ENCODE measurements at regions of chr17 and their contacts with region 1.

Region 1: GRCh38 chr17:30093463-30094147 is 23.0 kb upstream of the NSRP1 start:
- DNase-seq: peak in 1 of 2 donors; percentile 50
- ATAC-seq: peak; percentile 53 to 82 (median 74)
- H3K4me3 ChIP-seq: no peak overlapping the region
- H3K27ac ChIP-seq: no peak overlapping the region
- H3K4me1 ChIP-seq: peaks cover 0 to 10% (median 7%) of the 10 kb centered on the region in 9 donors
- H3K27me3 ChIP-seq: peaks cover 0 to 15% (median 3%) of the 10 kb centered on the region in 7 donors
- CTCF ChIP-seq: peak; percentile 79 to 89 (median 83)

Region 2: DNA sequence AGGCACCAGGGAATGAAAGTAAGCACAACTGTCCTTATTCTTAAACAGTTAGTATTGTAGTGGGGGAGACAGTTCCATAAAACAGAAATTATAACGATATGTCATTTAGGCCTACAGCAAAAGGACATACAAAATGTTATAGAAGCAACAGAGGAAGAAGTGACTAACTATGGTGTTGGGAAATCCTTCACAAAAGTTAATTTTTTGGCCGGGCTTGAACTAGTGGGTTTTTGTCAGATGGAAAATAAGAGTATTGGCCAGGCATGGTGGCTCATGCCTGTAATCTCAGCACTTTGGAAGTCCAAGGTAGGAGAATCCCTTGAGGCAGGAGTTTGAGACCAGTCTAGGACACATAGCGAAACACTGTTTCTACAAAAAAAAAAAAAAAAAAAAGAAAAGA is 291.4 kb before region 1 on chr17:
- intact Hi-C with region 1: loop called in 8 of 10 experiments (anchors 5 to 10 kb)
- DNase-seq: no peak
- ATAC-seq: no peak
- H3K4me3 ChIP-seq: no peak overlapping the region
- H3K27ac ChIP-seq: no peak overlapping the region
- H3K4me1 ChIP-seq: no peaks in the 10 kb centered on the region
- H3K27me3 ChIP-seq: no peaks in the 10 kb centered on the region
- CTCF ChIP-seq: no peak

Region 3: GRCh38 chr17:29936724-29937123 is 156.9 kb before region 1 on chr17:
- intact Hi-C with region 1: loop called in 2 of 10 experiments (anchors 5 to 10 kb)
- DNase-seq: no peak
- ATAC-seq: no peak
- H3K4me3 ChIP-seq: no peak overlapping the region
- H3K27ac ChIP-seq: no peak overlapping the region
- H3K4me1 ChIP-seq: peaks cover 0 to 2% (median 2%) of the 10 kb centered on the region in 9 donors
- H3K27me3 ChIP-seq: no peaks in the 10 kb centered on the region
- CTCF ChIP-seq: no peak

Region 4: GRCh38 chr17:30021708-30022317 is 71.8 kb before region 1 on chr17:
- intact Hi-C with region 1: loop called in 3 of 10 experiments (anchors 5 kb)
- DNase-seq: no peak
- ATAC-seq: no peak
- H3K4me3 ChIP-seq: no peak overlapping the region
- H3K27ac ChIP-seq: no peak overlapping the region
- H3K4me1 ChIP-seq: no peaks in the 10 kb centered on the region
- H3K27me3 ChIP-seq: peaks cover 0 to 6% (median 0%) of the 10 kb centered on the region in 7 donors
- CTCF ChIP-seq: peak; percentile 53 to 84 (median 74)

Region 5: GRCh38 chr17:30134551-30134950 is 40.9 kb after region 1 on chr17:
- intact Hi-C with region 1: no loop called
- DNase-seq: no peak
- ATAC-seq: no peak
- H3K4me3 ChIP-seq: no peak overlapping the region
- H3K27ac ChIP-seq: no peak overlapping the region
- H3K4me1 ChIP-seq: peaks cover 0 to 31% (median 13%) of the 10 kb centered on the region in 9 donors
- H3K27me3 ChIP-seq: no peaks in the 10 kb centered on the region
- CTCF ChIP-seq: no peak

Region 6: GRCh38 chr17:30203471-30203981 is 109.9 kb after region 1 on chr17:
- intact Hi-C with region 1: no loop called
- DNase-seq: no peak
- ATAC-seq: no peak
- H3K4me3 ChIP-seq: no peak overlapping the region
- H3K27ac ChIP-seq: no peak overlapping the region
- H3K4me1 ChIP-seq: no peaks in the 10 kb centered on the region
- H3K27me3 ChIP-seq: peaks cover 0 to 18% (median 0%) of the 10 kb centered on the region in 7 donors
- CTCF ChIP-seq: no peak